ENCODE measurements at regions of chr1 and their contacts with region 1.

Region 1: DNA sequence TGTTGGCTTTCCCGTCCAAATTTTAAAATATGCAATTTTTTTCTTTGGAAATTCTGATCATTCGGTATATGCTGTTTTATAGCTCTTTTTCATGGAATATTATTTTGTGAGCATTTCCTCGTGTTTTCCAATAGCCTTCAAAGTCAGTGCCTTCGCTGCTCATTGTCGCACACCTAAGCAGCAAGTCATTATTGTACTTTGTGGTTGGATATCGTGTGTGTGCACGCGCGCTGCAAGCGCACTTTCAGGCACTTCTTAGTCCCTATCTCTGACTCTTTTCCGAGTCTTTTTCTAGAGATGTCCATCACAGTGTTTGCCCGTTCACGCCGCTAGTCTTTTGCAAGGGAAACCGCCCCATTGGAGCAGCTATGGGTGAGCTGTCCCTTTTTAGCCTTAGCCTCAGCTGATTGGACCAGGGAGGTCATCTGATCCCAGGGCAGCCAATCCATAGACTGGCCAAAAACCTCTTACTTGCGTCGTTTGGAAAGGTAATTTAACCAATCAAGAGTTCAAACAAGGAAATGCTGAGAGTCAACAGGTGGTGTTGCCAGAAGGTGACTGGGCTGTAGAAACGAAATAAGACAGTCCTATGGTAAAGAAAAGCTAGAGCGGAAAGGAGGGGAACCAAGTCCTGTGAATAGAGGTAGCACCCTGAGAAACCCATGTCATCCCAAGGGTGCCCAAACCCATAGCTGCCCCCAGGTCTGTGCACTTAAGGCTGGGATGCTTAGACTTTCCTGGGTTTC is 708 bp upstream of the HYI start:
- DNase-seq: peak; percentile 85
- H3K4me3 Mint-ChIP-seq: peak overlapping the region; percentile 80
- H3K27ac Mint-ChIP-seq: peak overlapping the region; percentile 85
- H3K4me1 Mint-ChIP-seq: peaks cover 19% of the 10 kb centered on the region
- H3K27me3 Mint-ChIP-seq: peaks cover 18% of the 10 kb centered on the region

Region 2: DNA sequence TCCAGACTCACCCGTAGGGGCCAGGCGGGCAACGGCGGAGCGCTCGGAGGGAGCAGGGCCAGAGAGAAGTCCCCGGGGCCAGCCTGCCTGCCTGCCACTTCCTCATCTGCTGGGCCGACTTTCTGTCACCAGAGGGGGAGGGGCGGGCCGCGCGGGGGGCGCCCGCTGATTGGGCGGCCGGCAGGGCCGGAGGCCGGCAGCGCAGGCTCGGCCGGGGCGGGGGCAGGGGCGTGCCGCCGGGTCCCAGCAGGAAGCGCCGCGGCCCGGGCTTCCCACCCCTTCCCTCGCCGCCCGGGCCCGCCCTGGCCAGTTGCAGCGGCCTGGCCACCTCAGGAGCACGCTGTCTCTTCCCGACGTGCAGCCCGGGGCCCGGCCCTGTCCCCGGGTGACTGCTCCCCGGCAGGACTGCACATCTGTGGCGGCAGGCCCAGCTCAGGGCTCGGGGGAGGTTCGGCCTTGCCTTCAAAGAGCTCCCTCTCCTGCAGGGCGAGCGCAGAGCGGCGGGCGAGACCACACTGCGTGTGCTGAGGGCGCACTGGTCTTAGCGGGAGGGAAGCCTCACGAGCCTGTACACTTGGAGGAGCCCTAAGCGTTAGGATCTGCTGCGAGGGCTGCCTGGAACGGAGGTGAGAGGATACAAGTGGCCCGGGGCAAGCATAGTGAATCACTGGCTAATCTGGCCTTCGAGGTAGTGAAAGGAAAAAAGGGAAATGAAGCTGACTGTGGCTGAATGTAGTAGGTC is 86.4 kb before region 1 on chr1 and contains the start of gene ELOVL1:
- CTCF ChIA-PET with region 1: no interaction called
- POLR2A ChIA-PET with region 1: interaction called, 5 read pairs
- intact Hi-C with region 1: loop called (anchors 5 kb)
- DNase-seq: peak; percentile 94
- H3K4me3 Mint-ChIP-seq: peak within 1 kb of the TSS; percentile 93
- H3K27ac Mint-ChIP-seq: peak within 1 kb of the TSS; percentile 91
- H3K4me1 Mint-ChIP-seq: peaks cover 29% of the 10 kb centered on the region
- H3K27me3 Mint-ChIP-seq: no peaks in the 10 kb centered on the region
- total RNA-seq, gene ELOVL1: 63.4 to 64.7 TPM

Region 3: DNA sequence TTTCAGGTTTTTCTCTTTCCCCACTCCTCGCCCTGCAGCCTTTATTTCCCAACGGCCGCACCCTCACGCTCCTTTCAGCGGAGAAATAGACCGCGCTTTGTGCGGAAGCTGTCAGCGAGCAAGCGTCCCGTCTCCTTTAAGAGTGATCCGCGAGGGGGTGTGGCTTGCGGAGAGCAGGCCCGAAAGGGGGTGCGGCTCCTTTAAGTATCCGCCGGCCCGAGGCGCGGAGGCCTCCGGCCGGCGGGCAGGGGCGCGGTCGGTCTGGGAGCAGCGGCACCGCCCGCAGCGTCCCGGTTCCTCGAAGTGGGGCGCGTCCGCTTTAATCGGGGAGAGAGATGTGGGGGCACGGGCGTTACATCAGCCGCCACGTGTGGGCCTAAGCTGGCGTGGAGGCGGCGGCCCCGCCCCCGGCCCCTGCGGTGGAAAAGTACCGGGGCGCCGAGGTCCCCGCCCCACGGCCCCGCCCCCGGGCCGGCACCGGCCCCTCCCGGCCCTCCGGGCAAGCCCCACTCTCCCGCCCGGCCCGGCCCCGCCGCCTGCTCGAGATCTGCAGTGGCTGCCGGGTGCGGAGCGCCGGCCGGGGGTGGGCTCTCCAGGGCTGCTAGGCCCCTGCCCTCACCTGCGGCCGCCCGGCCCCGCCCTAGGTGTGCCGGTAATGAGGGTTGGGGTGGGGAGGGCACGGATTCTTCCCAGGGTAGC is 575.6 kb after region 1 on chr1:
- CTCF ChIA-PET with region 1: no interaction called
- POLR2A ChIA-PET with region 1: no interaction called
- intact Hi-C with region 1: loop called (anchors 10 kb)
- DNase-seq: peak; percentile 92
- H3K4me3 Mint-ChIP-seq: peak overlapping the region; percentile 94
- H3K27ac Mint-ChIP-seq: peak overlapping the region; percentile 95
- H3K4me1 Mint-ChIP-seq: peaks cover 13% of the 10 kb centered on the region
- H3K27me3 Mint-ChIP-seq: no peaks in the 10 kb centered on the region

Measured in activated CD4-positive, alpha-beta memory T cell treated with anti-CD3 and anti-CD28 coated beads for 36 hours (primary cell).